CD4-positive, alpha-beta T cell (primary cell): ENCODE measurements at regions of chr1 and their contacts with region 1.

Region 1: DNA sequence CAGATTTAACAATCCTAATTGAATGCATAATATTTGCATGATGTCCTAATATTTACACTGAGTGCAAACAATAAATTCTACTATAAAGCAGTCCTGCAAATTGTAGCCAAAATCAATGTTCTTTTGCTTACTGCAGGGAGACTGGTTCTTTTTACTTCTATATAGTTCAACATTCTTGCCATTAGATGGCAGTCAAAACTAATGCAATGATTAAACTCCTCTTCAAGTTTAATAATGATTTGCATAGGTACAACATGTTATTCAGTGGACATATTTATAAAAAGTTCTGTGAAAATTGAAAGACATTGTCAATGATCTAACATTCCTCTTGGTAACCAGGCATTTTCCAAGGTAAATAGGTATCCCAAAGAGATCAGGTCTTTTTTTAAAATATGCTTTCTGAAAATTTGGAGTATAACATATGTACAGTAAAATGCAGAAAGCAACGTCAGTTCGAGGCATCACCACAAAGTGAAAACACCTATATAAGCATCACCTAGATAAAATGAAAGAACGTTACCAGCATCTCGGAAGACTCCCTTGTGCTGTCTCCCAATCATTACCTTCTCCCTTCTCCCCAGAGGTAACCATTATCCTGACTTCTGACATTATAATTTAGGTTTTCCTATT is 9.8 kb upstream of the FNBP1L start:
- DNase-seq: peak in 3 of 14 experiments; percentile 52 to 63 (median 60)
- ATAC-seq: peak; percentile 54
- H3K4me3 ChIP-seq: no peak overlapping the region
- H3K4me3 Mint-ChIP-seq: no peak overlapping the region
- H3K27ac ChIP-seq: no peak overlapping the region
- H3K27ac Mint-ChIP-seq: no peak overlapping the region
- H3K4me1 ChIP-seq: no peaks in the 10 kb centered on the region
- H3K4me1 Mint-ChIP-seq: no peaks in the 10 kb centered on the region
- H3K27me3 ChIP-seq: peaks cover 0 to 9% of the 10 kb centered on the region in 2 experiments
- H3K27me3 Mint-ChIP-seq: no peaks in the 10 kb centered on the region
- CTCF ChIP-seq: peak; percentile 77

Region 2: GRCh38 chr1:93304716-93305138 is 133.4 kb before region 1 on chr1:
- CTCF ChIA-PET with region 1: interaction called, 3 read pairs
- POLR2A ChIA-PET with region 1: no interaction called
- intact Hi-C with region 1: loop called (anchors 5 to 10 kb)
- DNase-seq: peak in 12 of 14 experiments; percentile 5 to 80 (median 34)
- ATAC-seq: peak; percentile 73
- H3K4me3 ChIP-seq: no peak overlapping the region
- H3K4me3 Mint-ChIP-seq: no peak overlapping the region
- H3K27ac ChIP-seq: no peak overlapping the region
- H3K27ac Mint-ChIP-seq: no peak overlapping the region
- H3K4me1 ChIP-seq: no peaks in the 10 kb centered on the region
- H3K4me1 Mint-ChIP-seq: no peaks in the 10 kb centered on the region
- H3K27me3 ChIP-seq: no peaks in the 10 kb centered on the region
- H3K27me3 Mint-ChIP-seq: no peaks in the 10 kb centered on the region
- CTCF ChIP-seq: peak; percentile 92

Region 3: GRCh38 chr1:93814059-93814794 is 376.1 kb after region 1 on chr1:
- CTCF ChIA-PET with region 1: no interaction called
- POLR2A ChIA-PET with region 1: no interaction called
- intact Hi-C with region 1: loop called in 1 of 2 experiments (anchors 2 kb)
- DNase-seq: peak in 9 of 14 experiments; percentile 8 to 72 (median 25)
- ATAC-seq: peak; percentile 31
- H3K4me3 ChIP-seq: no peak overlapping the region
- H3K4me3 Mint-ChIP-seq: no peak overlapping the region
- H3K27ac ChIP-seq: no peak overlapping the region
- H3K27ac Mint-ChIP-seq: no peak overlapping the region
- H3K4me1 ChIP-seq: peaks cover 17% of the 10 kb centered on the region
- H3K4me1 Mint-ChIP-seq: peaks cover 22% of the 10 kb centered on the region
- H3K27me3 ChIP-seq: no peaks in the 10 kb centered on the region
- H3K27me3 Mint-ChIP-seq: no peaks in the 10 kb centered on the region
- CTCF ChIP-seq: peak; percentile 71

Region 4: DNA sequence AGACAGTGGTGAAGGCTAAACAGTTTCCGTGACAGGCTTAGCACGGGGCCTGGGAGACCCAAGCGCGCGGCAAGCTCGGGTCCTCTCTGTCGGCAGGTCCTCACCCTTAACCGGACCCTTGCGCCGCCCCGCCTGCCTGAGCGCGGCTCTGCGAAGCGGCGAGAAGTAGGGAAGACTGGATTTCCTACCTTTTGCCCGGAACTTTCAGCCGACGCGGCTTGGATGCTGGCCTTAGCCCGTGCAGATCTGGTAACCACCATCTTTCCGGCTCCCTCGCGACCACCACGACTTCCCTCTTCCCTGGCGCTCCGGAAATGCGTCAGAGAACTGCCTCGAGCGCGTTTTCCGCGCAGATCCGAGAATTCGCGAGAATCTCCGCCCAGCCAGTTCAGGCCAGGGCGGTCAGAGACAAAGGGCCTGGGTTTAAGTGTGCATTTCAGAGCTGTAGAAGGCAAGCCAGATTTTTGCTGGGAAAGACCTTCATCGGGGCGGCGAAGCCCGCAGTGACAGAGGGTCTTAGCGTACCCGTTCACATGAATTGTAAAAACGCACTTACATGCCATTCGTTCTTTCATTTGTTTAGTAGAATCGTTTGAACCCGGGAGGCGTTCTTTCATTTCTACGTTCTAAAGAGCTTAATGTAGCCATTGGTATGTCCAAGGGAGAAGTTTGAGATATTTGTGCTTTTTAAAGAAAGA is 440.9 kb after region 1 on chr1 and contains the start of gene DNTTIP2:
- CTCF ChIA-PET with region 1: no interaction called
- POLR2A ChIA-PET with region 1: no interaction called
- intact Hi-C with region 1: loop called (anchors 10 kb)
- DNase-seq: peak; percentile 78 to 93 (median 82)
- ATAC-seq: peak; percentile 82
- H3K4me3 ChIP-seq: peak within 1 kb of the TSS; percentile 91
- H3K4me3 Mint-ChIP-seq: peak within 1 kb of the TSS; percentile 100
- H3K27ac ChIP-seq: peak within 1 kb of the TSS; percentile 85 to 94
- H3K27ac Mint-ChIP-seq: peak within 1 kb of the TSS; percentile 98
- H3K4me1 ChIP-seq: peaks cover 26% of the 10 kb centered on the region
- H3K4me1 Mint-ChIP-seq: peaks cover 45% of the 10 kb centered on the region
- H3K27me3 ChIP-seq: no peaks in the 10 kb centered on the region
- H3K27me3 Mint-ChIP-seq: no peaks in the 10 kb centered on the region
- CTCF ChIP-seq: no peak
- total RNA-seq, gene DNTTIP2: 110 to 120 TPM

Region 5: GRCh38 chr1:93909146-93910050 is 471.3 kb after region 1 on chr1 and contains the start of gene GCLM:
- CTCF ChIA-PET with region 1: no interaction called
- POLR2A ChIA-PET with region 1: no interaction called
- intact Hi-C with region 1: loop called (anchors 5 to 10 kb)
- DNase-seq: peak; percentile 78 to 95 (median 86)
- ATAC-seq: peak; percentile 89
- H3K4me3 ChIP-seq: peak within 1 kb of the TSS; percentile 68
- H3K4me3 Mint-ChIP-seq: peak within 1 kb of the TSS; percentile 96
- H3K27ac ChIP-seq: peak within 1 kb of the TSS; percentile 25 to 73
- H3K27ac Mint-ChIP-seq: peak within 1 kb of the TSS; percentile 83
- H3K4me1 ChIP-seq: peaks cover 20% of the 10 kb centered on the region
- H3K4me1 Mint-ChIP-seq: peaks cover 44% of the 10 kb centered on the region
- H3K27me3 ChIP-seq: no peaks in the 10 kb centered on the region
- H3K27me3 Mint-ChIP-seq: no peaks in the 10 kb centered on the region
- CTCF ChIP-seq: peak; percentile 78
- total RNA-seq, gene GCLM: 6.1 to 6.8 TPM

Region 6: DNA sequence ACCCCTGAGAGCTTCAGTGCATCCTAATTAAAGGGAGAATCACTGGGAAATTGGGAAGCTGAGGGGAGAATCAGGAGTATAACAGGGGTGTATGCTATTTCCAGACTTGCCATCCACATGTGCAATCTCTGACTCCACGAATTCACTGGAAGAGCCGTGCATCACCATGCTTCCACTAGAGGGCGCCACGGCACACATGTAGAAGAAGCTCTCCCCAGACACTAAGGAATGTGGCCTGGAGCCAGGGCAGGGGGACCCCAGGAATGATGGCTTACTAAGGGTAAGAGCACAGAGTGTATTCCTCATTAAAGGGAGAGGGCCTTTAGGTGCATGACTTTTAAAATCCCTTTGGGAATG is 601.4 kb after region 1 on chr1:
- CTCF ChIA-PET with region 1: no interaction called
- POLR2A ChIA-PET with region 1: no interaction called
- intact Hi-C with region 1: loop called in 1 of 2 experiments (anchors 10 kb)
- DNase-seq: peak; percentile 17 to 69 (median 36)
- ATAC-seq: no peak
- H3K4me3 ChIP-seq: no peak overlapping the region
- H3K4me3 Mint-ChIP-seq: no peak overlapping the region
- H3K27ac ChIP-seq: no peak overlapping the region
- H3K27ac Mint-ChIP-seq: no peak overlapping the region
- H3K4me1 ChIP-seq: no peaks in the 10 kb centered on the region
- H3K4me1 Mint-ChIP-seq: no peaks in the 10 kb centered on the region
- H3K27me3 ChIP-seq: peaks cover 0 to 6% of the 10 kb centered on the region in 2 experiments
- H3K27me3 Mint-ChIP-seq: peaks cover 40% of the 10 kb centered on the region
- CTCF ChIP-seq: peak; percentile 74

Region 7: GRCh38 chr1:94805912-94806311 is 1367.8 kb after region 1 on chr1:
- CTCF ChIA-PET with region 1: no interaction called
- POLR2A ChIA-PET with region 1: no interaction called
- intact Hi-C with region 1: loop called in 1 of 2 experiments (anchors 5 kb)
- DNase-seq: peak in 11 of 14 experiments; percentile 17 to 67 (median 35)
- ATAC-seq: peak; percentile 77
- H3K4me3 ChIP-seq: no peak overlapping the region
- H3K4me3 Mint-ChIP-seq: no peak overlapping the region
- H3K27ac ChIP-seq: no peak overlapping the region
- H3K27ac Mint-ChIP-seq: no peak overlapping the region
- H3K4me1 ChIP-seq: peaks cover 5% of the 10 kb centered on the region
- H3K4me1 Mint-ChIP-seq: peaks cover 6% of the 10 kb centered on the region
- H3K27me3 ChIP-seq: peaks cover 2 to 7% of the 10 kb centered on the region in 2 experiments
- H3K27me3 Mint-ChIP-seq: peaks cover 4% of the 10 kb centered on the region
- CTCF ChIP-seq: peak; percentile 99